ENCODE measurements at regions of chrX and their contacts with region 1.

Region 1: DNA sequence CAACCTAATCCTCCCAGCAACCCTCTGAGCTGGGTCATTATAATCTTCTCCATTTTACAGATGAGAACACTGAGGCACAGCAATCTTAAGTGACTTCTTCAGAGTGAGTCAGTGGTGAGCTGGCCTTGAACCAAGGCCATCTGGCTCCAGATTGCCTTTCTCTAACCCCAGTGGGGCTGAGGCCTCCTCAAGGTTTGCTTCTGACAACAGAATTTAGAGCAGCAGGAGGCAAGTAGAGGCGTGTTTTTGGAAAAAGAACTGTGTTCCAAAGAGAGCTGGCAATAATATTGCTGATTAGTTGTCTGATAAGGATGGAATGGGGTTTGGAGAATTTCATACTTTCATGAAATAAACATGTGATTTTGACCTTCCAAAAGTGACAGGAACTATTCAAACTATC is 41.2 kb downstream of the PIR start:
- DNase-seq: peak in 1 of 2 donors; percentile 17
- ATAC-seq: peak in 1 of 8 donors; percentile 73
- H3K4me3 ChIP-seq: no peak overlapping the region
- H3K27ac ChIP-seq: no peak overlapping the region
- H3K4me1 ChIP-seq: peaks cover 0 to 5% (median 0%) of the 10 kb centered on the region in 9 donors
- H3K27me3 ChIP-seq: peaks cover 0 to 75% (median 0%) of the 10 kb centered on the region in 7 donors
- CTCF ChIP-seq: no peak

Region 2: GRCh38 chrX:15356444-15356843 is 95.5 kb before region 1 on chrX:
- intact Hi-C with region 1: loop called in 1 of 10 experiments (anchors 10 kb)
- DNase-seq: no peak
- ATAC-seq: peak in 4 of 8 donors; percentile 33 to 55 (median 50)
- H3K4me3 ChIP-seq: no peak overlapping the region
- H3K27ac ChIP-seq: no peak overlapping the region
- H3K4me1 ChIP-seq: peaks cover 0 to 6% (median 0%) of the 10 kb centered on the region in 9 donors
- H3K27me3 ChIP-seq: peaks cover 0 to 26% (median 0%) of the 10 kb centered on the region in 7 donors
- CTCF ChIP-seq: no peak

Region 3: GRCh38 chrX:15404401-15405096 is 47.4 kb before region 1 on chrX:
- intact Hi-C with region 1: loop called in 1 of 10 experiments (anchors 10 kb)
- DNase-seq: peak; percentile 25 to 70
- ATAC-seq: peak; percentile 69 to 94 (median 88)
- H3K4me3 ChIP-seq: no peak overlapping the region
- H3K27ac ChIP-seq: peak overlapping the region in 8 of 10 donors; percentile 22 to 64 (median 45)
- H3K4me1 ChIP-seq: peaks cover 0 to 52% (median 15%) of the 10 kb centered on the region in 9 donors
- H3K27me3 ChIP-seq: peaks cover 0 to 64% (median 0%) of the 10 kb centered on the region in 7 donors
- CTCF ChIP-seq: no peak

Region 4: GRCh38 chrX:15653961-15654360 is 202.0 kb after region 1 on chrX:
- intact Hi-C with region 1: no loop called
- DNase-seq: no peak
- ATAC-seq: no peak
- H3K4me3 ChIP-seq: no peak overlapping the region
- H3K27ac ChIP-seq: no peak overlapping the region
- H3K4me1 ChIP-seq: no peaks in the 10 kb centered on the region
- H3K27me3 ChIP-seq: peaks cover 0 to 97% (median 0%) of the 10 kb centered on the region in 7 donors
- CTCF ChIP-seq: no peak